ENCODE measurements at regions of chr6 and their contacts with region 1.

Region 1: DNA sequence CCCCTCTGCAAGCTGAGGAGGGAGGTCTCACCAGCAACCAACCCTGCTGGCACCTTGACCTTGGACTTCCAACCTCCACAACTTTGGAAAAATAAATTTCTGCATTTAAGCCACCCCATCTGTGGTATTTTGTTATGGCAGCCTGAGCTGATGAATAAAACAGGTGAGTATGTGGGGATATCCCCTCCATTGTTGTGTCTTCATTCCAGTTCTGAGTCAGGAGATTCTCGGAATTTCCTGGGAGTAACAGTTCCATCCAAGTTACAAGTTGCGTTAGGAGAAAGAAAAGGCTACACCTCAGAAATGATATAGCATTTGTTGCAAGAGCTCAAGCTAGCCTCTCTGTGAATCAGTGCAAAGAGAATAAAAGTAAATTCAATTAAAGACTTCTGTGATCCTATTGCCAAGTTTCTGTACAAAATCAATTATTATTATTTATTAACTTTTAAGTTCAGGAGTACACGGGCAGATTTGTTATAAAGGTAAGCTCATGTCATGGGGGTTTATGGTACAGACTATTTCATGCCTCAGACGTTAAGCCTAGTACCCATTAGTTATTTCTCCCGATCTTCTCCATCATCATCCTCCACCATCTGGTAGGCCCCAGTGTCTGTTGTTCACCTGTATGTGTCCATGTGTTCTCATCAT is 153.0 kb downstream of the NKAIN2 start:
- DNase-seq: no peak
- ATAC-seq: no peak

Region 2: GRCh38 chr6:123925358-123925757 is 31.3 kb before region 1 on chr6:
- intact Hi-C with region 1: loop called in 1 of 2 experiments (anchors 5 kb)
- DNase-seq: no peak
- ATAC-seq: no peak

Measured in left colon (tissue), 2 donors.